Calu3 (cell line): ENCODE measurements at regions of chr11 and their contacts with region 1.

Region 1: DNA sequence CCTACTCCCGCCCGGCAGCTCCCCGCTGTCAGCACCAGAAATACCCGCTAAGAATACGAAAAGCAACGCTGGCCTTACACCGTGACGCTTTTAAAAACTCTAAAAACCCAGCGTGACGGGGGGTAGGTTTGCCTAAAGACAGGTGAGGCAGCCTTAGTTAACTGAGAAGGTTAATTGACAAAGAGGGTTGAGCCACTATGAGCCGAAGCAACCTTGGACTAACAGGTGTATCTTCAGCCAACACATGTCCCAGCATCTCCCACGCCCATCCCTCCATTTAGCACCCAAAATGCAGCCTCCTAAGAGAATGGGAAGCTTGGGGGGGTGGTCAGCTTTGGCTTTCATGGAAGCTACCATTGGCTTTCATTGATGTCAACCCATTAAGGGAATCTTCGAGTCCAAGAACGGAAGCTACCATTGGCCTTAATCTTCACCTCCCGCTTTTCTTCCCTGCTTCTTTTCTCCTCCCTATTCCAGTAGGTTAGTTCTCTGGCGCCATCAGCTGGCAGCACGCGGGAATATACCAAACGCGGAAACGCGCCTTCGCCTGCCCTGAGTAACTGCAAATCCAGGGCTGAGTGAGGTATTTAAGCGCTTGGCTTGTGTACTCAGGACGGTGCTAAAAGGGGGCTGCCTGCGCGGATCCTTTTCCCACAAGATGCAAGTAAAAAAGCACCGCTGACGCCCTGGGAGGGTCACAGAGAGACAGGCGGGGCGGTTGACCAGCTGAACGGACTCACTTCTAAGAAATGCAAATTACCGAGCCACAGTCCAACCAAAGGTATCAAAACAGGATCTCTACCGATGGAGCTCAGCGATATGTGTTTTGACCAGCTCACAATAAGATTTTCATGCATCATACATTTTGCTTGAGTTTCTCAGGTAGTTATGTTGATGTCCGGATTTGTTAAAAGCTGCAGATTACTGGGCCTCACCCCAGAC is 38.5 kb upstream of the GLYATL1 start:
- DNase-seq: peak; percentile 85
- H3K4me3 Mint-ChIP-seq: peak overlapping the region; percentile 22
- H3K27ac Mint-ChIP-seq: no peak overlapping the region
- H3K4me1 Mint-ChIP-seq: no peaks in the 10 kb centered on the region
- H3K27me3 Mint-ChIP-seq: peaks cover 41% of the 10 kb centered on the region
- CTCF ChIP-seq: peak; percentile 60

Region 2: DNA sequence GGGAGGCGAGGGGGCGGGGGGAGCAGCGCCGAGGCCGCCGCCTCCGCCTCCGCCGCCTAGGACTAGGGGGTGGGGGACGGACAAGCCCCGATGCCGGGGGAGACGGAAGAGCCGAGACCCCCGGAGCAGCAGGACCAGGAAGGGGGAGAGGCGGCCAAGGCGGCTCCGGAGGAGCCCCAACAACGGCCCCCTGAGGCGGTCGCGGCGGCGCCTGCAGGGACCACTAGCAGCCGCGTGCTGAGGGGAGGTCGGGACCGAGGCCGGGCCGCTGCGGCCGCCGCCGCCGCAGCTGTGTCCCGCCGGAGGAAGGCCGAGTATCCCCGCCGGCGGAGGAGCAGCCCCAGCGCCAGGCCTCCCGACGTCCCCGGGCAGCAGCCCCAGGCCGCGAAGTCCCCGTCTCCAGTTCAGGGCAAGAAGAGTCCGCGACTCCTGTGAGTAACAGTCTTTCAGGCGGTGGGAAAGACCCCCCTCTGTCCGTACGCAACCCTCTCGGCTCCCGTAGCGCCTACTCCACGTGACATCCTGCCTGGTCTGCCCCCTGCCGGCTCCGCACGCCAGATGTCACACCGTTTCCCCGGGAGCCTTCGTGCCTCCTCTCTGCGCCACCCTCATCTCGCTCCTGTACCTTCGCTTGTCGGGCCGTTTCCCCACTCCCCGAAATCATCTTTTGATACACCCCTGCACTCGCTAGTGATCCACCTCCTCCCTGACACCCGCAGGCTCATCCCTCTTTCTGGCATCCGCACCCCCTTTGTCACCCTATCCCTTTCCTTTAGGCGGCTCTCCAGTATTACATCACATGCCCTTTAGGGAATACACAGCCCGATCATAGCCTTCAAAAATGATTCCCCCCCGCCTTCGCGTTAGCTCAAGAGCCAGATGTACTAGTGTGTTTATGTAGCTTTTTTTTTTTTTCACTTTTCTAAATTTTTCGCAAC is 321.3 kb before region 1 on chr11:
- CTCF ChIA-PET with region 1: no interaction called
- intact Hi-C with region 1: loop called (anchors 5 kb)
- DNase-seq: peak; percentile 92
- H3K4me3 Mint-ChIP-seq: peak overlapping the region; percentile 97
- H3K27ac Mint-ChIP-seq: peak overlapping the region; percentile 96
- H3K4me1 Mint-ChIP-seq: peaks cover 26% of the 10 kb centered on the region
- H3K27me3 Mint-ChIP-seq: no peaks in the 10 kb centered on the region
- CTCF ChIP-seq: peak; percentile 85

Region 3: DNA sequence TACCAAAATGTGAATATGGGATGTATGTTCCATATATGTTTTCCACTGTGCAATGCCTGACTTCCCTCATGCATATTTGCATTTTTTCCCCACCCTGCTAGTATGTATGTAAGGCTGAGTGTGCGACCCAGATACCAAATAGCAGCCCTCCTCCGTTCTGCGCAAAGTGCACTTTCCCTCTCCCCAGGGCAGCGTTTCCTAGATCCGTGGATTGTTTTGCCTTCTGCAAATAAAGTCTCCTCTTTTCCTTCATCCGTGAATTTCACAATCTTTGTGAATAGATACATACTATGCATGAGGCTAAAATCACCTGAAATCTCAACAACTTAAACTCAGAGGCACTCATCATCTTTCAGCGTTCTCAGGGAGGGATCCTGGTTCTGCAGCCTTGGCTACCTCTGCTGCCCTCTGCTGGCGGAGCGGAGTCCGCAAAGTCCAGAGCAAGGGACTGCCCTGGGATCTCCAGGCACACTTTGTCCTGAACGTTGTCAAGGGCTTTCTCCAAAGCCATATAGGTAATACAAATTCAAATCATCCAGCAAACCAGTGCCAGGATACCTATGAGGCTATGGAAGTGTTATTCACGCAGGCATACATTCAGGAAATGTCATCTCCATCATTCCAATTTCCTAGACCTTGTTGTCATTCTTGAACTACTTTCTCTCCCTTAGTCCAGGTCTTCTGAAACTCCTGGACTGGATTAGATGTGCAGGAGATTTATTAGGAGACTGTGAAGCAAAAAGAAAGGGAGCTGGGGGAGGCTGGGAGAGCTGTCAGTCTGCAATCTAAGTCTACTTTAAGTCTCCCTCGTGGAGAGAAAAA is 225.2 kb before region 1 on chr11:
- CTCF ChIA-PET with region 1: no interaction called
- intact Hi-C with region 1: loop called (anchors 1 kb)
- DNase-seq: peak; percentile 87
- H3K4me3 Mint-ChIP-seq: no peak overlapping the region
- H3K27ac Mint-ChIP-seq: no peak overlapping the region
- H3K4me1 Mint-ChIP-seq: peaks cover 8% of the 10 kb centered on the region
- H3K27me3 Mint-ChIP-seq: no peaks in the 10 kb centered on the region
- CTCF ChIP-seq: peak; percentile 69

Region 4: GRCh38 chr11:58788355-58789023 is 112.3 kb before region 1 on chr11:
- CTCF ChIA-PET with region 1: no interaction called
- intact Hi-C with region 1: loop called (anchors 2 kb)
- DNase-seq: peak; percentile 59
- H3K4me3 Mint-ChIP-seq: no peak overlapping the region
- H3K27ac Mint-ChIP-seq: no peak overlapping the region
- H3K4me1 Mint-ChIP-seq: no peaks in the 10 kb centered on the region
- H3K27me3 Mint-ChIP-seq: no peaks in the 10 kb centered on the region
- CTCF ChIP-seq: peak; percentile 70

Region 5: DNA sequence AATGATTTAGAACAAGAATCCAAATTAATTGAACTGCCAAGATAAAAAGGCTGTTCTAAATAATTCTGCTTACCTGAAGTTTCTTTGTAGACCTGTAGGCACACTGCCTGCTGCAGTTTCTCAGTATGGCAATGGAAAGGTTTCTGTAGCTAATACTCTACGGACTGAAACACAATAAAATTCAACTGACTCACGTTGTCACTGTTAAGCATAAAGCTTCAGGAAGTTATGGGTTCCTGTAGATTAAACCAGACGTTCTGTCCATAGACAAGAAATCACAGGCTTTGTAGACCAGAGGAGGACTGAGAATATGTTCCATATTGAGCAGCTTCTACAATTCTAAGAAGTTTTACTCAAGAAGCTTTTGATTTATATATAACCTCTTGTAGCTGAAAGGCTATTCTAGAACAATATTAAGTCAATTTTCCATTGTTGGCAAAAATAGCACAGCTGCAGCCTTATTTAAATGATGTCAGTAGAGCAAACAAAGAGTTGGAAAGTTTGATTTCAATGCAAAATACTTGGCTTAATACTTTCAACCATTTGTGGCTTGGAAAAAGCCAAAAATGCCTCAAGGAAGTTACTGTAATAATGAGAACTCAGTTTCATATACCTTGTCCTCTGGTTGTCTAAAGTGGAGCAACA is 56.3 kb before region 1 on chr11 and contains the start of gene GLYATL2:
- CTCF ChIA-PET with region 1: no interaction called
- intact Hi-C with region 1: loop called (anchors 5 kb)
- DNase-seq: no peak
- H3K4me3 Mint-ChIP-seq: no peak within 1 kb of the TSS
- H3K27ac Mint-ChIP-seq: no peak within 1 kb of the TSS
- H3K4me1 Mint-ChIP-seq: peaks cover 12% of the 10 kb centered on the region
- H3K27me3 Mint-ChIP-seq: peaks cover 17% of the 10 kb centered on the region
- CTCF ChIP-seq: no peak
- total RNA-seq, gene GLYATL2: 0.91 and 1.3 TPM in 2 replicates

Region 6: DNA sequence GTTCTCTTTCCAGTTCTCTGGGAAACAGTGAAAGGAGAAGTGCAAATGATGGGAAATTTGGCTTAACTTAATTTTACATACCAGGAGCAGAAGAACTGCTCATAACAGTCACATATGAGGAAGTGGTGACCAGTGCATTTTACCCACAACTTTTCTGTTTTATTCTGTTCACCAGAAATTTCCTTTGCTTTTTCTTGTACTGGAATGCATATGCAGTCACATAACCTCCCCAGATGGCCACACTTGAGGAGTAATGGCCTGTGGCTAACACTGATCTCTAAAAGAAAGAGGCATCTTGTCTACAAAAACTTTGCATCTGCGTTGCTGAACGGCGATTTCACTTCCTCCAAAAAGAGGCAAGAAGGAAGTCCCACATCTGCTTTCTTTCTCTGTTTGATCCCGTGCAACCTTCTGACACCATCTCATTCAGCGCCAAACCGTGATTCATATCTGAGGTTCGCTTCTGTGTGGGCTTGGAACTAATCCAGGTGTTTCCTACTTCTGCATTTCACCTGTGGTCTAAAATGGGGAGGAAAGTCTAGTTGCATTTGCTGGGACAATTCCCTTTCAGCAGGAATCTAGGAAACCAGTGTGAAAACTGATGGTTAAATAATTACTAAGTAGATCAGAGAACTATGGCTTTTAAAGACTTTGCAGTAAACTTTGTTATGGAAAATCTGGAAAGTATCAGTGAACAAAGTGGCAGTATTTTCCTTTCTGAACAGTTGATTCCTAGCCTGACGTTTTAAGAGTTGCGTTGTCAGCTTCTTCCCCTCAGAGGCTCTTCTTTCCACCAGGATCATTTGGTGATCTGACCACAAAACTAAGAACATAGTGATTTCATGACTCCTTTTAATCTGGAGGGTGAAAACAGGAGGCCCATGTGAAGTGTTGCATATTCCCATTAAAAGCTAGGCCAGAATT is 316.2 kb after region 1 on chr11:
- CTCF ChIA-PET with region 1: no interaction called
- intact Hi-C with region 1: no loop called
- DNase-seq: peak; percentile 22
- H3K4me3 Mint-ChIP-seq: no peak overlapping the region
- H3K27ac Mint-ChIP-seq: no peak overlapping the region
- H3K4me1 Mint-ChIP-seq: peaks cover 16% of the 10 kb centered on the region
- H3K27me3 Mint-ChIP-seq: no peaks in the 10 kb centered on the region
- CTCF ChIP-seq: no peak